PC-9 (cell line): ENCODE measurements at regions of chr3 and their contacts with region 1.

Region 1: GRCh38 chr3:87437765-87438164 is 161.4 kb upstream of the POU1F1 start:
- DNase-seq: no peak
- H3K4me3 ChIP-seq: no peak overlapping the region
- H3K27ac ChIP-seq: no peak overlapping the region
- H3K4me1 ChIP-seq: no peaks in the 10 kb centered on the region
- H3K27me3 ChIP-seq: no peaks in the 10 kb centered on the region
- CTCF ChIP-seq: no peak

Region 2: GRCh38 chr3:87161417-87161816 is 276.3 kb before region 1 on chr3:
- CTCF ChIA-PET with region 1: no interaction called
- POLR2A ChIA-PET with region 1: no interaction called
- intact Hi-C with region 1: no loop called
- DNase-seq: no peak
- H3K4me3 ChIP-seq: no peak overlapping the region
- H3K27ac ChIP-seq: no peak overlapping the region
- H3K4me1 ChIP-seq: no peaks in the 10 kb centered on the region
- H3K27me3 ChIP-seq: no peaks in the 10 kb centered on the region
- CTCF ChIP-seq: no peak

Region 3: GRCh38 chr3:87359826-87360225 is 77.9 kb before region 1 on chr3:
- CTCF ChIA-PET with region 1: no interaction called
- POLR2A ChIA-PET with region 1: no interaction called
- intact Hi-C with region 1: loop called (anchors 10 kb)
- DNase-seq: peak; percentile 30 to 35
- H3K4me3 ChIP-seq: no peak overlapping the region
- H3K27ac ChIP-seq: no peak overlapping the region
- H3K4me1 ChIP-seq: peaks cover 7% of the 10 kb centered on the region
- H3K27me3 ChIP-seq: no peaks in the 10 kb centered on the region
- CTCF ChIP-seq: no peak

Region 4: DNA sequence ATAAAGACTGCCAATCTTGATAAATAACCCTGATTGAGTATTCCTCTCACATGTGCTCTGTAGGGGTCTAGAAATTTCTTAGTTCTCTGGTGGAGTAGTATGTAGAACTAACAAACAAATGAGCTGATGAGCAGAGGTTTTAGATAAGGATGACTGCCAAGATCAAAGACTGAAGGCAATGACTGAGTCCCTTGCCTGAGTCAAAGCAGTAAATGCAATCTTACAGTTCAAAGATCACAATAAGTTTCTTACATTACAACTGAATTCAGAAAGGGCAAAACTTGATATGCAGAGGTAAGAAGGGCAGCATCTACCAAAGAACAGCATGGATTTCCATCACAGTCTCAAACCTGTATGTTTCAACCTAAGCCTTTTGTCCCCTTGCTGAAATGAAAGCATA is 10.8 kb after region 1 on chr3:
- CTCF ChIA-PET with region 1: no interaction called
- POLR2A ChIA-PET with region 1: no interaction called
- intact Hi-C with region 1: no loop called
- DNase-seq: no peak
- H3K4me3 ChIP-seq: no peak overlapping the region
- H3K27ac ChIP-seq: no peak overlapping the region
- H3K4me1 ChIP-seq: no peaks in the 10 kb centered on the region
- H3K27me3 ChIP-seq: no peaks in the 10 kb centered on the region
- CTCF ChIP-seq: no peak